CD8-positive, alpha-beta T cell (primary cell): ENCODE measurements at regions of chr13 and their contacts with region 1.

Region 1: GRCh38 chr13:98842864-98843481 is 90.5 kb upstream of the SLC15A1 start:
- DNase-seq: peak; percentile 19 to 68 (median 57)
- ATAC-seq: peak; percentile 82
- H3K4me3 ChIP-seq: no peak overlapping the region
- H3K4me3 Mint-ChIP-seq: no peak overlapping the region
- H3K27ac ChIP-seq: no peak overlapping the region
- H3K27ac Mint-ChIP-seq: no peak overlapping the region
- H3K4me1 ChIP-seq: no peaks in the 10 kb centered on the region
- H3K4me1 Mint-ChIP-seq: peaks cover 2% of the 10 kb centered on the region
- H3K27me3 ChIP-seq: no peaks in the 10 kb centered on the region
- H3K27me3 Mint-ChIP-seq: no peaks in the 10 kb centered on the region
- CTCF ChIP-seq: peak; percentile 80

Region 2: GRCh38 chr13:97855570-97856303 is 987.2 kb before region 1 on chr13:
- CTCF ChIA-PET with region 1: no interaction called
- POLR2A ChIA-PET with region 1: no interaction called
- intact Hi-C with region 1: loop called in 1 of 2 experiments (anchors 2 kb)
- DNase-seq: peak in 2 of 9 experiments; percentile 23 to 28
- ATAC-seq: no peak
- H3K4me3 ChIP-seq: no peak overlapping the region
- H3K4me3 Mint-ChIP-seq: no peak overlapping the region
- H3K27ac ChIP-seq: no peak overlapping the region
- H3K27ac Mint-ChIP-seq: no peak overlapping the region
- H3K4me1 ChIP-seq: no peaks in the 10 kb centered on the region
- H3K4me1 Mint-ChIP-seq: no peaks in the 10 kb centered on the region
- H3K27me3 ChIP-seq: no peaks in the 10 kb centered on the region
- H3K27me3 Mint-ChIP-seq: peaks cover 10% of the 10 kb centered on the region
- CTCF ChIP-seq: peak; percentile 63

Region 3: GRCh38 chr13:98856983-98857382 is 14.0 kb after region 1 on chr13:
- CTCF ChIA-PET with region 1: interaction called, 13 read pairs
- POLR2A ChIA-PET with region 1: no interaction called
- intact Hi-C with region 1: no loop called
- DNase-seq: no peak
- ATAC-seq: no peak
- H3K4me3 ChIP-seq: no peak overlapping the region
- H3K4me3 Mint-ChIP-seq: no peak overlapping the region
- H3K27ac ChIP-seq: no peak overlapping the region
- H3K27ac Mint-ChIP-seq: no peak overlapping the region
- H3K4me1 ChIP-seq: no peaks in the 10 kb centered on the region
- H3K4me1 Mint-ChIP-seq: no peaks in the 10 kb centered on the region
- H3K27me3 ChIP-seq: no peaks in the 10 kb centered on the region
- H3K27me3 Mint-ChIP-seq: no peaks in the 10 kb centered on the region
- CTCF ChIP-seq: no peak

Region 4: GRCh38 chr13:99133230-99133629 is 290.3 kb after region 1 on chr13:
- CTCF ChIA-PET with region 1: interaction called, 3 read pairs
- POLR2A ChIA-PET with region 1: no interaction called
- intact Hi-C with region 1: loop called in 1 of 2 experiments (anchors 10 kb)
- DNase-seq: no peak
- ATAC-seq: no peak
- H3K4me3 ChIP-seq: no peak overlapping the region
- H3K4me3 Mint-ChIP-seq: no peak overlapping the region
- H3K27ac ChIP-seq: no peak overlapping the region
- H3K27ac Mint-ChIP-seq: no peak overlapping the region
- H3K4me1 ChIP-seq: no peaks in the 10 kb centered on the region
- H3K4me1 Mint-ChIP-seq: no peaks in the 10 kb centered on the region
- H3K27me3 ChIP-seq: no peaks in the 10 kb centered on the region
- H3K27me3 Mint-ChIP-seq: no peaks in the 10 kb centered on the region
- CTCF ChIP-seq: no peak